ENCODE measurements at regions of chr17 and their contacts with region 1.

Region 1: DNA sequence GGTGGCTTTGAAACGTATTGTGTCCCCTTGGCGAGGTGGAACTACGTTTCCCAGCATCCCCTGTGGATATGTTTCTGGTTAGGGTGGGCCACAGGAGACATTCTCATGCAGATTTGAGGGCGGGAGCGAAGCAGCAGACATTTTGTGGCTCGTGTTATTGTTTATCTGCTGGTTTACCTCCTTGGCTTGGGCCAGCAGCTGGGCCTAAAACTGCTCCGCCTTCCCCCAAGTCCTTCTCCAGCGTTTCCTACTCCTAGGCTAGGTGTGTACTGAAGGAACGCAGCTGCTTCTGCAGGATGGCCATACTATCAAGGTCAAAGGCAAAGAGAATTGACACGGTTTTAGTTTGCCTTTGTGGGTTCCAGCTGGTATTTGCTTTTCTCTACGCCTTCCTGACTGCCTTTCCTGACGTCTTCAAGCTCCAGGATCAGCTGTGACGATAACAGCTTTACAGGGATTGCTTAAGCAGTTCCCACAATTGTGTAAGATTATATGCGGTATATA is 17.2 kb upstream of the WSB1 start:
- DNase-seq: no peak
- ATAC-seq: no peak
- H3K4me3 ChIP-seq: no peak overlapping the region
- H3K27ac ChIP-seq: no peak overlapping the region
- H3K4me1 ChIP-seq: no peaks in the 10 kb centered on the region
- H3K27me3 ChIP-seq: no peaks in the 10 kb centered on the region
- CTCF ChIP-seq: no peak

Region 2: DNA sequence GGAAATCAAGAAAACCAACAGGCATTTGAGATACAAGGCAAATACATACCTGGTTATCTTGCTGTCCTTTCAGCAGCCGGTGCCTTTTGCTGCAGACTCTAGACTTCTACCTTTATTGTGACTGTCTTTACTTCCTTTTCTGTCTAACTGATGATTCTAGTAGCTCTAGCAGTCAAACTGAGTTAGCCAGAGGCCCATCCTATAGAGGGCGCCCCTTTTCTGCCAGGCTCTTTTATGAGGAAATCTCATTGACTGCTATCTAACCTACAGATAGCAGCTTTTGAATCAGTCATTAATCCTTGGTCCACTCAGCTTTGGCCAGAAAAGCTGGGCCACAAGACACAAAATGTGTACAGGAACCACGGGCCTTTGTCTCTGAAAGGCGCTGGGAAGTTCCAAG is 70.3 kb before region 1 on chr17:
- CTCF ChIA-PET with region 1: no interaction called
- POLR2A ChIA-PET with region 1: no interaction called
- intact Hi-C with region 1: no loop called
- DNase-seq: no peak
- ATAC-seq: no peak
- H3K4me3 ChIP-seq: no peak overlapping the region
- H3K27ac ChIP-seq: no peak overlapping the region
- H3K4me1 ChIP-seq: peaks cover 22% of the 10 kb centered on the region
- H3K27me3 ChIP-seq: no peaks in the 10 kb centered on the region
- CTCF ChIP-seq: peak; percentile 42

Region 3: DNA sequence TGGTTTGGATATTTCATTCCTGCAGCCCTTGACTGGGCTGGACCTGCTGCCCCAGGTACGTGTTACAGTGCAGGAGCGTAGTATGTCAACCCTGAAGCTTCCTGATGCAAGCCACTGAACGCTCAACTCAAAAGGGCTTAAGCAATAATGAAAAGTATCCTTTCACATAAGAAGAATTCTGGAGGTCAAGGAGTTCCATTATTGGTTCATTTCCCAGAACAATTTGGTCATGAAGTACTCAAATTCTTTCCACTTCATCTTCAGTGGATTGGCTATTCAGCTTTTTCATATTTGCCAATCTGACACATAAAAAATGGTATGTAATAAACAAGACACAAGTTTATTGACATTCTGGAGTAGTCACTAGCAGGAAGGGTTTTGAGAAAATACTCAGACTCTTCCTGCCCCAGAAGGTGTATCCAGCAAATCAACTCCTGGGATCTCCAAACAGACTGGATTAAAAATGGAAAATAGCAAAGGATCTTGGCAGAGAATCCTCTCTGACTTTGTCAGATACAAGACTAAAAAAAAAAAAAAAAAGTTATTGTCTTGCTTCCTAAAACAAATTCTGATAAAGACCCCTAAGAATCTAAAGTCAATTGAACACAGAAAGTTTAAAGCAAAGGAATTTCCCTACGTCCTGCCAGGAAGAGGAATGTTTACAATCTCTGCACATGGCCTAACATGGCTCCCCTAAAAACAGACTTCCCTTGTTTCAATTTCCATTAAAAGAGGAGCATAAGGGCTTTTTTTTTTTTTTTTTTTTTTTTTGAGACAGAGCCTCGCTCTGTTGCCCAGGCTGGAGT is 20.3 kb before region 1 on chr17:
- CTCF ChIA-PET with region 1: no interaction called
- POLR2A ChIA-PET with region 1: no interaction called
- intact Hi-C with region 1: loop called (anchors 1 kb)
- DNase-seq: peak; percentile 77
- ATAC-seq: peak; percentile 84
- H3K4me3 ChIP-seq: no peak overlapping the region
- H3K27ac ChIP-seq: peak overlapping the region; percentile 80
- H3K4me1 ChIP-seq: peaks cover 15% of the 10 kb centered on the region
- H3K27me3 ChIP-seq: no peaks in the 10 kb centered on the region
- CTCF ChIP-seq: no peak

Region 4: DNA sequence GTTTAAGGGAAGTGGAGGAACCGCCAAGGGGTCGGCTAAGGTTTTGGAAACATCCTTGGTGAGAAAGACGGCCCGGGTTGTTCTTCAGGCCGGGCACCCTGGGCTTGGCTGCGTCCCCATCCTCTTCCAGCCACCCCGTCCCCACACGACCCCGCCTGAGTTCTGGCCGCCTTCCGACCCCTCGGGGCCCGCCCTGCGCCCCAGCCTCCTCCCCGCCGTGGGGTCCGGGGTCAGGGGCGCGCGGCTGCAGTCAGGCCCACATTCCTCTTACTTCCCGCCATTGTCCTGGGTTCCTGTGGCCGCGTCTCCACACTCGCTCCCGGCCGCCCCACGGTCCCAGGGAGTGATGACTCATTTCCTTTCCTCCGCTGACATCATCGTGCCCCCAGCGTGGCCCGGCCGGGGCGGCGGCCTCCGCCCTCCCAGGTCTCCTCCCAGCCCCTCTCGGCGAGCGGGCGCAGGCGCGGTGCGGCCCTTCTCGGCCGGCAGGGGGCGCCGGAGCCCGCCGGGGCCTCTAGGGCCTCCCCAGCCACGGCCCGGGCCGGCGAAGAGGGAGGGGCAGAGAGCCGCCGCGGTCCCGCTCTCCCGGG is 76.9 kb after region 1 on chr17:
- CTCF ChIA-PET with region 1: no interaction called
- POLR2A ChIA-PET with region 1: no interaction called
- intact Hi-C with region 1: no loop called
- DNase-seq: peak; percentile 93
- ATAC-seq: peak; percentile 92
- H3K4me3 ChIP-seq: peak overlapping the region; percentile 67
- H3K27ac ChIP-seq: peak overlapping the region; percentile 81
- H3K4me1 ChIP-seq: peaks cover 17% of the 10 kb centered on the region
- H3K27me3 ChIP-seq: no peaks in the 10 kb centered on the region
- CTCF ChIP-seq: peak; percentile 72

Region 5: DNA sequence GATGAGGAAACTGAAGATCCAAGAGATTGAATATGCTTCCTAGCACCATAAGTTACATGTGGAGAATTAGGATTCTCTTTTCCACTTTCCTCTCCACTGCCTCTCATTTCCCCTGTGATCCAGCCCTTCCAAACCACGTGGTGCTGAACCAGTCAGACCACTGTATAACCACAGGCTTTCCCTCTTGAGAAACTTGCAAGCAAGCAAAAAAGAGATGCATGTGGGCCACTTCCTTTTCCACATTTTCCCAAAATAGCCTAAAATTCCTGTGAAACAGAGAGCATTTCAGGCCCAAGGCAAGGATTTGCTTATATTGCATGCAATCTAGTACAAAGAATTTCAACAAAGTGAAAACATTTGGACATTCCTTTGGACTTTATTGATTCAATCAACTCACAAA is 120.2 kb after region 1 on chr17:
- CTCF ChIA-PET with region 1: no interaction called
- POLR2A ChIA-PET with region 1: no interaction called
- intact Hi-C with region 1: no loop called
- DNase-seq: peak; percentile 18
- ATAC-seq: no peak
- H3K4me3 ChIP-seq: no peak overlapping the region
- H3K27ac ChIP-seq: no peak overlapping the region
- H3K4me1 ChIP-seq: no peaks in the 10 kb centered on the region
- H3K27me3 ChIP-seq: no peaks in the 10 kb centered on the region
- CTCF ChIP-seq: no peak